ENCODE measurements at regions of chr12 and their contacts with region 1.

Region 1: GRCh38 chr12:53205747-53206419 is 1.2 kb downstream of the ITGB7 start:
- DNase-seq: no peak
- H3K4me3 ChIP-seq: peak overlapping the region; percentile 25 to 72 (median 40)
- H3K27ac ChIP-seq: peak overlapping the region; percentile 54 to 92 (median 76)
- H3K4me1 ChIP-seq: peaks cover 36 to 100% (median 93%) of the 10 kb centered on the region in 6 donors
- H3K27me3 ChIP-seq: no peaks in the 10 kb centered on the region
- CTCF ChIP-seq: no peak
- POLR2A ChIP-seq: no peak

Region 2: GRCh38 chr12:53079226-53080117 is 126.4 kb before region 1 on chr12 and contains the start of gene SPRYD3:
- intact Hi-C with region 1: loop called (anchors 10 kb)
- DNase-seq: peak; percentile 98
- H3K4me3 ChIP-seq: peak within 1 kb of the TSS; percentile 67 to 85 (median 77)
- H3K27ac ChIP-seq: peak within 1 kb of the TSS; percentile 76 to 95 (median 92)
- H3K4me1 ChIP-seq: peaks cover 7 to 58% (median 36%) of the 10 kb centered on the region in 6 donors
- H3K27me3 ChIP-seq: no peaks in the 10 kb centered on the region
- CTCF ChIP-seq: peak in 3 of 11 experiments; percentile 0 to 33 (median 30)
- POLR2A ChIP-seq: peak; percentile 22 to 86 (median 84)
- total RNA-seq, gene SPRYD3: 29.2 to 44.5 (median 36.4) TPM

Region 3: GRCh38 chr12:53251477-53252348 is 45.8 kb after region 1 on chr12:
- intact Hi-C with region 1: loop called (anchors 5 kb)
- DNase-seq: peak; percentile 95
- H3K4me3 ChIP-seq: peak overlapping the region; percentile 86 to 97 (median 88)
- H3K27ac ChIP-seq: peak overlapping the region; percentile 75 to 95 (median 89)
- H3K4me1 ChIP-seq: peaks cover 22 to 60% (median 50%) of the 10 kb centered on the region in 6 donors
- H3K27me3 ChIP-seq: no peaks in the 10 kb centered on the region
- CTCF ChIP-seq: peak in 8 of 11 experiments; percentile 4 to 48 (median 20)
- POLR2A ChIP-seq: peak in 2 of 3 donors; percentile 10 to 26

Region 4: DNA sequence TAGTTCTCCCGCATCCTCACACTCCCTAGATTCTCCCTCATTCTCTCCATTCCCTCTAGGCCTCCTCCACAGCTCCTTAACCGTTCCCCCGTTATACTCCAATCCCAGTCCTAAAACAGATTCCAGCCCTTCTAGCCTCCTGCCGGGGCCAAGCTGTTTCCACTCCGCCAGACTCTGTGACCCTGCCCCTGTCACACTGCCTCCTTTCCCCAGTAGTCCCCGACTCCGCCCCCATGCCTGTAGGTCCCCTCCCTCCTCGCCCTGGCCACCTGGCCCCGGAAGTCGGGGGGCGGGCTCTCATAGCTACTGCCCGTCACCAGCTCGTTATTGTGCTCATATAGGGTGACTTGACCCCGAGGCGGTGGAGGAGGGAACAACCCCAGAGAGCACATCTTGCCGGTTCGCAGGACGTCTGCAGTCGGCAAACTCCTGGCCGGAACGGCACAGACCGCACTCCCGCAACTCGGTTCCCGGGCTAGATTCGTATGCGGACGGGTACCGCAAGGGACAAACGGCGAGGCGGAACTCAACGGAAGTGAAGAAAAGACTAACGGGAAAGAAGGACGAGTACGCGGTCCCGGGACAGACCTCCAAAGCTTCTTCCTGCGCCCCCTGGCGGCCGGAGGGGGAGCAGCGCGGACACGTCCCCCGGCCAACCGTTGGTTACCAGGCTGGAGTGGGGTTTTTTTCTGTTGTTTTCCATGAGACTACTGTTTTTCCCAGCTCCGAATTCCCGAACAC is 115.4 kb after region 1 on chr12 and contains the start of gene AAAS:
- intact Hi-C with region 1: no loop called
- DNase-seq: peak; percentile 99
- H3K4me3 ChIP-seq: peak within 1 kb of the TSS; percentile 70 to 86 (median 80)
- H3K27ac ChIP-seq: peak within 1 kb of the TSS; percentile 89 to 97 (median 94)
- H3K4me1 ChIP-seq: peaks cover 26 to 70% (median 48%) of the 10 kb centered on the region in 6 donors
- H3K27me3 ChIP-seq: peaks cover 0 to 9% (median 0%) of the 10 kb centered on the region in 7 donors
- CTCF ChIP-seq: peak; percentile 97 to 100 (median 99)
- POLR2A ChIP-seq: peak in 2 of 3 donors; percentile 12 to 63
- total RNA-seq, gene AAAS: 39.3 to 67.9 (median 49.7) TPM

Measured in spleen (tissue), 13 donors.